ENCODE measurements at regions of chr9 and their contacts with region 1.

Region 1: GRCh38 chr9:99140685-99141314 is 35.9 kb downstream of the TGFBR1 start:
- DNase-seq: peak in 4 of 5 donors; percentile 31 to 62 (median 47)
- H3K4me3 ChIP-seq: no peak overlapping the region
- H3K4me3 Mint-ChIP-seq: no peak overlapping the region
- H3K27ac ChIP-seq: no peak overlapping the region
- H3K27ac Mint-ChIP-seq: peak overlapping the region; percentile 10 to 85 (median 42)
- H3K4me1 ChIP-seq: peaks cover 28% of the 10 kb centered on the region
- H3K4me1 Mint-ChIP-seq: peaks cover 39 to 51% (median 44%) of the 10 kb centered on the region in 3 donors
- H3K27me3 ChIP-seq: no peaks in the 10 kb centered on the region
- H3K27me3 Mint-ChIP-seq: no peaks in the 10 kb centered on the region

Region 2: GRCh38 chr9:98848450-98849149 is 292.2 kb before region 1 on chr9:
- CTCF ChIA-PET with region 1: interaction called, 17 read pairs
- POLR2A ChIA-PET with region 1: no interaction called
- DNase-seq: peak; percentile 37 to 77 (median 56)
- H3K4me3 ChIP-seq: no peak overlapping the region
- H3K4me3 Mint-ChIP-seq: no peak overlapping the region
- H3K27ac ChIP-seq: no peak overlapping the region
- H3K27ac Mint-ChIP-seq: peak overlapping the region in 1 of 8 donors; percentile 18
- H3K4me1 ChIP-seq: no peaks in the 10 kb centered on the region
- H3K4me1 Mint-ChIP-seq: peaks cover 2 to 6% (median 5%) of the 10 kb centered on the region in 3 donors
- H3K27me3 ChIP-seq: no peaks in the 10 kb centered on the region
- H3K27me3 Mint-ChIP-seq: no peaks in the 10 kb centered on the region

Region 3: DNA sequence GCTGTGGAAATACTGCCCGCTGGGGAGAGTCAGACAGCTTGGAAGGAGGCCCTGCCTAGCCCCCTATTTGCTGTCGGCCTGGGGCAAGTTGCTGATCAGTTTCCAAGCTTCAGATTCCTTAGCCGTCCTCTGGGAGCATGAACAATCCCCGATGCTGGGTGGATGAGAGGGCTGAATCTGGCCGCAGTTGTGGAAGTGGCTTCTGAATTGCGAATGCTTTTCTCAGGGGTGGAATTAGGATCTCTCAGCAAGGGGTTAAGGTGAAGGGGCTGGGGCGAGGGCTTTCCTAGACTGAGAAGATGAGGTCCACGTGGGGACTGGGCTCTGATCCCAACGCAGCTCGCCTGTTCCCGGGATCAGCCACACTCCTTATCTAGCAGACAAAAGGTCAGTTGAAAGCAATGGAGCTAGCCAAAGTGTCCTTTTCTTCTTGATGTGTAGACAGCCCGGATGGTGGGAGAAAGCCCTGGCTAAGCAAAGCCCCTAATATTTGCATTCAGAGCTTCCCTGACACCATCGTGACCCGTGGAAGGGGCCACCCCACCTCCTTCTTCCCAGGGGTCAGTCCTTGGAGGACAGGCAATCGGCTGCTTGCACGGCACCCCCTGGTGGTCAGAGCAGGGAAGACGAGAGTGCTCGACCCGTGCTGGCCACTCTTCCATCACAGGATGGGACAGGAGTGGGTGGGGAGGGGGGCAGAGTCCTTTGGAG is 142.2 kb before region 1 on chr9:
- CTCF ChIA-PET with region 1: interaction called, 199 read pairs
- POLR2A ChIA-PET with region 1: no interaction called
- DNase-seq: peak; percentile 29 to 67 (median 45)
- H3K4me3 ChIP-seq: no peak overlapping the region
- H3K4me3 Mint-ChIP-seq: no peak overlapping the region
- H3K27ac ChIP-seq: no peak overlapping the region
- H3K27ac Mint-ChIP-seq: peak overlapping the region in 1 of 8 donors; percentile 63
- H3K4me1 ChIP-seq: peaks cover 19% of the 10 kb centered on the region
- H3K4me1 Mint-ChIP-seq: peaks cover 13 to 24% (median 23%) of the 10 kb centered on the region in 3 donors
- H3K27me3 ChIP-seq: no peaks in the 10 kb centered on the region
- H3K27me3 Mint-ChIP-seq: peaks cover 15 to 19% of the 10 kb centered on the region in 2 donors

Region 4: DNA sequence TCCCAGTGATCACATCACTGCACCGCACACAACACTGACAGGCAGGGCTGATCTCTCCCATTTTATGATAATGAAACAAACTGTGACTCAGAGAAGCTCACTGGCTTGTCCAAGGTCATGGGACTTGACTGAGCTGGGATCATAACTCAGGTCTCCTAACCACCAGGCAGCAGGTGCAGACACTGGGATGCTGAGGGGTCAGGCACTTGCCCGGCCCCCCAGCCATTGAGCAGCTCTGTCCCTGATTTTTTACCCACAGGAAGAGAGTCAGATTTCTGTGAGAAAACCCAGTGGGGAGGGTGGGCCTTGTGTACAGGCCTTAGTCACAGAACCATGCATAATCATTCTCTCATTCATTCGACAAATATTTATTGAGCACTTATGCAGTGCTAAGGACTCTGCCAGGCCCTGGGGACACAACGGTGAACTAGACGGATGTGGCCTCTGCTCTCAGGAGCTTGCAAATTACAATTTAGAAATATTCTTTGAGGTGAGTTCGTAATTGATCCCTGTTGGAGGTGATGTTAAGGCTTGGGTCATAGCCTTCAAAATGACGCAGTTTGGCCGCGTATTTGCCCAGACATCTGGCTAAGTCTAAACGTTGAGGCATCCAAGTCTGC is 90.4 kb before region 1 on chr9:
- CTCF ChIA-PET with region 1: interaction called, 10 read pairs
- POLR2A ChIA-PET with region 1: no interaction called
- DNase-seq: no peak
- H3K4me3 ChIP-seq: no peak overlapping the region
- H3K4me3 Mint-ChIP-seq: no peak overlapping the region
- H3K27ac ChIP-seq: no peak overlapping the region
- H3K27ac Mint-ChIP-seq: no peak overlapping the region
- H3K4me1 ChIP-seq: peaks cover 50% of the 10 kb centered on the region
- H3K4me1 Mint-ChIP-seq: peaks cover 65 to 79% (median 67%) of the 10 kb centered on the region in 3 donors
- H3K27me3 ChIP-seq: no peaks in the 10 kb centered on the region
- H3K27me3 Mint-ChIP-seq: no peaks in the 10 kb centered on the region

Region 5: DNA sequence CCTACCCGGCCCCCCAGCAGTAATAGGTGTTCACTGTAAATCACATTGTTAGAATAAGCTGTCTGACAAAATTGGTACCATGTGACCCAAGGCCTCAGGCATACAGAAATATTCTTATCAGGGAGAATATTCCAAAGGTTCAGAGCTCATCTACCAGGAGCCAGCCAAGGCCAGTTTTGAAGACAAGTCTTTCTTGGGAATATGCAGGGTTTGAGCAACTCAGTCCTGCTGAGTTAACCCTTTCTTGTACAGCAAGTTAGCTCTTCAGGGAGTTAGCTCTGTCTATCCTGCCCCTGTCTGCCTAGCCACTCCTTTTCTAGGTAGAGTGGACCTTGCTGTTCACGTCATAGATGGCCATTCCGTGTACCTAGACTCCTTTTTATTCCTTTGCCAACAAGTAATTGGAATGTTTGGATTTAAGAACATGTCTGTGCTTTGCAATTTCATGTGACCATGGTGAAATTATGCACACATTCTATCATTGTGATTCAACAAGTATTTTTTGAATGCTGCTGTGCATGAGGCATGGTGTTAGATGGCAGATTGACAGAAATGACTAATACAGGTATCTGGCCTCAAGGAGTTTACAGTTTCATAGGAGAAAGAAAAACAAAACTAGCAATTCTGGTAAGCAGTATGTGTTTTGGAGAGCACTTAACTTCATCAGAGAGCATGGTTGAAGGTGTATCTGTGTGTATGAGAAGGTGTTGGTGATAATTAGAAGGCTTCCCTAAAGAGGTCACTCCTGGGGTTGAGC is 13.2 kb before region 1 on chr9:
- CTCF ChIA-PET with region 1: interaction called, 13 read pairs
- POLR2A ChIA-PET with region 1: no interaction called
- DNase-seq: no peak
- H3K4me3 ChIP-seq: no peak overlapping the region
- H3K4me3 Mint-ChIP-seq: peak overlapping the region in 4 of 7 donors; percentile 1 to 36 (median 25)
- H3K27ac ChIP-seq: no peak overlapping the region
- H3K27ac Mint-ChIP-seq: peak overlapping the region; percentile 1 to 85 (median 68)
- H3K4me1 ChIP-seq: peaks cover 75% of the 10 kb centered on the region
- H3K4me1 Mint-ChIP-seq: peaks cover 86 to 94% (median 93%) of the 10 kb centered on the region in 3 donors
- H3K27me3 ChIP-seq: no peaks in the 10 kb centered on the region
- H3K27me3 Mint-ChIP-seq: no peaks in the 10 kb centered on the region

Region 6: GRCh38 chr9:99197987-99198386 is 57.2 kb after region 1 on chr9:
- CTCF ChIA-PET with region 1: no interaction called
- POLR2A ChIA-PET with region 1: no interaction called
- DNase-seq: no peak
- H3K4me3 ChIP-seq: no peak overlapping the region
- H3K4me3 Mint-ChIP-seq: no peak overlapping the region
- H3K27ac ChIP-seq: no peak overlapping the region
- H3K27ac Mint-ChIP-seq: peak overlapping the region in 1 of 8 donors; percentile 24
- H3K4me1 ChIP-seq: no peaks in the 10 kb centered on the region
- H3K4me1 Mint-ChIP-seq: peaks cover 0 to 8% (median 2%) of the 10 kb centered on the region in 3 donors
- H3K27me3 ChIP-seq: no peaks in the 10 kb centered on the region
- H3K27me3 Mint-ChIP-seq: peaks cover 0 to 5% of the 10 kb centered on the region in 2 donors

Measured in CD8-positive, alpha-beta memory T cell (primary cell).